WTC11 (cell line): ENCODE measurements at regions of chr11 and their contacts with region 1.

Region 1: GRCh38 chr11:72553706-72554105 is 119.4 kb upstream of the CLPB start:
- DNase-seq: peak; percentile 73
- ATAC-seq: peak; percentile 95
- H3K4me3 Mint-ChIP-seq: no peak overlapping the region
- H3K27ac Mint-ChIP-seq: no peak overlapping the region
- H3K4me1 Mint-ChIP-seq: peaks cover 5% of the 10 kb centered on the region
- H3K27me3 Mint-ChIP-seq: peaks cover 5% of the 10 kb centered on the region
- CTCF ChIP-seq: peak; percentile 57; the same call in 1 of the 2 replicates

Region 2: DNA sequence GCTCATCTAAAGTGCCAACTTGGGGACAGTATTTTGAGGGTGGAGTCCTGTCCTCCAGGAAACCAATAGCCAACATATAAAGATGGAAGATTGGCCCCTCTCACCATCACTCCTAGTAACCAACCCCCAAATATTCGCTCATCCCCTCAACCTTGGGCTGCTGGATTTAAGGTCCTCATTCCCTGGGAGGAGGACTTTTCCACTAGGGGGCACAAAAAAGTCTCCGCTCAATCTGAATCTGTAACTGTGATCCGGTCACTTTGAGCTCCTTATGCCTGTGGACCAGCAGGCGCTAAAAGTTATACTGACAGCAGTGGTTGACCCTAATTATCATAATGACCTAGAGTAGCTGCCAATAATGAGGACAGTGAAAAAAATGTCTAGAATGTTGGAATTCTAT is 98.9 kb before region 1 on chr11:
- CTCF ChIA-PET with region 1: interaction called, 42 read pairs
- POLR2A ChIA-PET with region 1: no interaction called
- DNase-seq: peak; percentile 17
- ATAC-seq: peak; percentile 67; the same call in 1 of the 2 replicates
- H3K4me3 Mint-ChIP-seq: no peak overlapping the region
- H3K27ac Mint-ChIP-seq: no peak overlapping the region
- H3K4me1 Mint-ChIP-seq: 0 out of 2 replicates have a peak, but pooled peaks cover 2% of the 10 kb centered on the region
- H3K27me3 Mint-ChIP-seq: peaks cover 8% of the 10 kb centered on the region
- CTCF ChIP-seq: no peak

Region 3: GRCh38 chr11:72483412-72484186 is 70.1 kb before region 1 on chr11:
- CTCF ChIA-PET with region 1: interaction called, 16 read pairs
- POLR2A ChIA-PET with region 1: no interaction called
- DNase-seq: no peak
- ATAC-seq: no peak
- H3K4me3 Mint-ChIP-seq: no peak overlapping the region
- H3K27ac Mint-ChIP-seq: no peak overlapping the region
- H3K4me1 Mint-ChIP-seq: no peaks in the 10 kb centered on the region
- H3K27me3 Mint-ChIP-seq: no peaks in the 10 kb centered on the region
- CTCF ChIP-seq: no peak

Region 4: DNA sequence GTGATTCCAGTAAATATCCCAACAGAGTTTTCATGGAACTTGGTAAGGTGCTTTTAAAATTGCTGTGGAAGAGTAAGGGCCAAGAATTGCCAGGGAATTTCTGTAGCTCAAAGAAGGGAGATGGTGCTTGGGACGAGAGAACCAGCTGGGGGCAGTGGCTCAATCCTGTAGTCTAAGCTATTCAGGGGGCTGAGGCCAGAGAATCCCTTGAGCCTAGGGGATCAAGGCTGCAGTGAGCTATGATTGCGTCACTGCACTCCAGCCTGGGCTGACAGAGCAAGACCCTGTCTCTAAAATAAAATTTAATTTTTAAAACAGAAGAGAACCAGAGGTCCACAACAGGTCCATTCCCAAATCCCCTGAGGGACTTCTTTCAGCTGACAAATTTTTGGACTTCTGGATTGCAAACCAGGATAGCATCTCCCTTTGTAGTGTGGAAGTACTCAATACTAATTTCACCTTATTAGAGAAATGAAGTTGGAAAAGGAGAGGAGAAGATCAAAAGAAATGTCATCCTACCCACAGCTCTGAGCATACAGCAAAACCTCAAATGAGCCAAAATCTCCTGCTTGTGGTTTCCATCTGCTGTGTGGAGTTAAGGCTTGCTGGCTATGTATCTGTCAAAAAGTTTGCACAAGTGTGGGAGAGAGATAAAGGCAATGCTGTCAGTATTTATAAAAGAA is 60.1 kb before region 1 on chr11:
- CTCF ChIA-PET with region 1: interaction called, 30 read pairs
- POLR2A ChIA-PET with region 1: no interaction called
- DNase-seq: no peak
- ATAC-seq: peak; percentile 55; the same call in 1 of the 2 replicates
- H3K4me3 Mint-ChIP-seq: no peak overlapping the region
- H3K27ac Mint-ChIP-seq: no peak overlapping the region
- H3K4me1 Mint-ChIP-seq: no peaks in the 10 kb centered on the region
- H3K27me3 Mint-ChIP-seq: no peaks in the 10 kb centered on the region
- CTCF ChIP-seq: no peak

Region 5: GRCh38 chr11:72534565-72535547 is 18.9 kb before region 1 on chr11:
- CTCF ChIA-PET with region 1: interaction called, 20 read pairs
- POLR2A ChIA-PET with region 1: no interaction called
- DNase-seq: peak; percentile 45
- ATAC-seq: peak; percentile 95
- H3K4me3 Mint-ChIP-seq: peak overlapping the region; percentile 7; the same call in 1 of the 2 replicates
- H3K27ac Mint-ChIP-seq: peak overlapping the region; percentile 75
- H3K4me1 Mint-ChIP-seq: peaks cover 28% of the 10 kb centered on the region
- H3K27me3 Mint-ChIP-seq: peaks cover 10% of the 10 kb centered on the region; the same call in 1 of the 2 replicates
- CTCF ChIP-seq: no peak

Region 6: DNA sequence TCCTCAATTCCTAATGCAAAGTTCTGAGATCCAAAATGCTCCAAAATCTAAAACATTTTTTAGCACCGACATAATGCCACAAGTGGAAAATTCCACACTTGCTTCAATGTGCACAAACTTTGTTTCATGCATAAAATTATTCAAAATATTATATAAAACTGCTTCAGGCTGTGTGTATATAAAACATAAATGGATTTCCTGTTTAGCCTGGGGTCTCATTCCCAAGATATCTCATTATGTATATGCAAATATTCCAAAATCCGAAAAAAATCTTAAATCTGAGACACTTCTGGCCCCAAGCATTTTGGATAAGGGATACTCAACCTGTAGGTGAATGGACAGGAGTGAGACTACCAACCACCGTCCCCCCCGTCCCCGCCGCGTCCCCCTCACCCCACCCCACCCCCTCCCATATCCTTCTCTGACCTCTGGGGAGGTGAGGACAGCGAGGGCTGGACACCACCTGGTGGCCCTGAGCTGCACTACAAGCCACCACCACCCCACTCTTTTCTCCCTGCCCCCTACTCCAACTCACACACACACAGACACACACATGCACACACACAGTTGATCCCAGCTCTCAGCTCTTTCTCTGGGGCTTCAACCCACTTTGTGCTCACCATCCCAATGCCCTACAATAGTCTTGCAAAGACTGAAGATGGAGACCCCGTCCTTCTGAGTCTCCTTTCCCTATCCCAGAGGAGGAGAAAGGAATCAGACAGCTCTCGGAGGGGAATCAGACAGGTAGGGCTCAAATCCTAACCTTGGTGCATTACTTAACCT is 19.6 kb after region 1 on chr11:
- CTCF ChIA-PET with region 1: interaction called, 22 read pairs
- POLR2A ChIA-PET with region 1: no interaction called
- DNase-seq: peak; percentile 78
- ATAC-seq: peak; percentile 96
- H3K4me3 Mint-ChIP-seq: no peak overlapping the region
- H3K27ac Mint-ChIP-seq: no peak overlapping the region
- H3K4me1 Mint-ChIP-seq: peaks cover 4% of the 10 kb centered on the region; the same call in 1 of the 2 replicates
- H3K27me3 Mint-ChIP-seq: peaks cover 21% of the 10 kb centered on the region
- CTCF ChIP-seq: peak; percentile 60

Region 7: DNA sequence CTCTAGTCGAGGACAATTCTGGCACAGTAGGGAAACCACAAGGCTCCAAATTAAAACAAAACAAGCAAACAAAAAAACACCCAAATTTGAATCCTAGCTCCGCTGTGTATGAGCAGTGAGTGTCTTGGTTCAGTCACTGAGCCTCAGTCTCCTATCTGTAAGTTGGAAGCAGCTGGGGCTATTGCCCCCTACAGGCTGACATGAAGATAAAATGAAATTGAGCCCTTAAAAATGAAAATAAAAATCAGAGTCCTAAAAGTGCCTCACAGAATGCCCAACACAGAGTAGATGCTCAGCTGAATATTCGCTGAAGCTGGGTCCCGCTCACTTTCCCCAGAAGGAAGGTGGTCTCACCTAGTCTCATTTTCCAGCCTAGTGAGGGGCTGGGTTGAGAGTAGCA is 55.3 kb after region 1 on chr11:
- CTCF ChIA-PET with region 1: no interaction called
- POLR2A ChIA-PET with region 1: no interaction called
- DNase-seq: no peak
- ATAC-seq: peak; percentile 47
- H3K4me3 Mint-ChIP-seq: no peak overlapping the region
- H3K27ac Mint-ChIP-seq: no peak overlapping the region
- H3K4me1 Mint-ChIP-seq: no peaks in the 10 kb centered on the region
- H3K27me3 Mint-ChIP-seq: peaks cover 3% of the 10 kb centered on the region
- CTCF ChIP-seq: no peak

Region 8: GRCh38 chr11:72621008-72621610 is 67.4 kb after region 1 on chr11:
- CTCF ChIA-PET with region 1: no interaction called
- POLR2A ChIA-PET with region 1: no interaction called
- DNase-seq: no peak
- ATAC-seq: no peak
- H3K4me3 Mint-ChIP-seq: no peak overlapping the region
- H3K27ac Mint-ChIP-seq: no peak overlapping the region
- H3K4me1 Mint-ChIP-seq: peaks cover 14% of the 10 kb centered on the region
- H3K27me3 Mint-ChIP-seq: peaks cover 6% of the 10 kb centered on the region; the same call in 1 of the 2 replicates
- CTCF ChIP-seq: no peak